ENCODE measurements at regions of chr2 and their contacts with region 1.

Region 1: GRCh38 chr2:168194784-168195522 is 52.4 kb downstream of the STK39 start:
- DNase-seq: no peak
- ATAC-seq: no peak
- H3K4me3 ChIP-seq: no peak overlapping the region
- H3K27ac ChIP-seq: no peak overlapping the region
- H3K4me1 ChIP-seq: peaks cover 96% of the 10 kb centered on the region
- H3K27me3 ChIP-seq: no peaks in the 10 kb centered on the region
- CTCF ChIP-seq: no peak
- EP300 ChIP-seq: no peak
- POLR2A ChIP-seq: no peak
- RAD21 ChIP-seq: no peak

Region 2: DNA sequence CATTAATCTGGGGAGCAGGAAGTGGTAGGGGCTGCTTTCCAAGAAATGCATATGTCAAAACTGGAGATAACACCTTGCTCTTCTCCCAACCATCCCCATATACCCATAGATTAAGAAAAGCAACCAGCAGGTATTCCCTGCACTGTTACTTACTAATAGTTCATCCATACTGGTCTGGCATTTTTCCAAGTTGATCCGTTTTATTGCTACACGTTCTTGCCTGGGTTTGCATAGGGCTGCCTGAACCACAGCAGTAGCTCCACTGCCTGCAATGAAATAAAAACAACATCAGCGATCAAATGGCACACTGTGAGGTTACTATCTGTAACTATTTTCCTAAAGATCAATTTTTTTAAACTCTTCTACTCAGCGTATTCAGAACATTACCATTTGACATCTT is 13.1 kb before region 1 on chr2:
- CTCF ChIA-PET with region 1: no interaction called
- POLR2A ChIA-PET with region 1: interaction called, 59 read pairs
- in situ Hi-C with region 1: no loop called
- intact Hi-C with region 1: loop called (anchors 1 kb)
- DNase-seq: no peak
- ATAC-seq: no peak
- H3K4me3 ChIP-seq: no peak overlapping the region
- H3K27ac ChIP-seq: peak overlapping the region; percentile 88
- H3K4me1 ChIP-seq: peaks cover 98% of the 10 kb centered on the region
- H3K27me3 ChIP-seq: no peaks in the 10 kb centered on the region
- CTCF ChIP-seq: no peak
- EP300 ChIP-seq: no peak
- POLR2A ChIP-seq: no peak
- RAD21 ChIP-seq: no peak

Region 3: DNA sequence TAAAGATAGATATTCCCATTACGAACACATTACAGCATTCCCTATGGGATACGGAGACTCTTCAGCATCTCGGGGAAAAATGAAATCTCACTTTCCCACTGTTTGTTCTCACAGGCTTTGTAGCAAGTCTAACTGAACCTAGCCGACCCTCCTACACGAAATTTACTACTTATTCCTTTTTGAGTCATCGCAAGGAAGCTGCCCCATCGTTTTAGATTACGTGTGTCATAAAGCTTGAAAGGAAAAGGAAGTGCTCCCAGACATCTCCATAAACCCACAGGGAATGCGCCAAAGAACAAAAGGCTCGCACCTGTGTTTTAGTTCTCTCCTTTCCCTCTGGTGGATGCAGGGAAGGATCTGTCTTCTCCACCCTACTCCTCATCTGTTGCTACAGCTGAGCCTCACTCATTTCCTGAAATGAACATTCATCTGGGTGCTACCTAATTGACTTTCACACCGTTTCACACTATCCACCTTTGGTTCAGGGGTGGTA is 128.6 kb after region 1 on chr2:
- CTCF ChIA-PET with region 1: no interaction called
- POLR2A ChIA-PET with region 1: no interaction called
- in situ Hi-C with region 1: no loop called
- intact Hi-C with region 1: no loop called
- DNase-seq: no peak
- ATAC-seq: no peak
- H3K4me3 ChIP-seq: no peak overlapping the region
- H3K27ac ChIP-seq: no peak overlapping the region
- H3K4me1 ChIP-seq: peaks cover 13% of the 10 kb centered on the region
- H3K27me3 ChIP-seq: 0 out of 5 replicates have a peak, but pooled peaks cover 2 to 7% of the 10 kb centered on the region in 2 experiments
- CTCF ChIP-seq: no peak
- EP300 ChIP-seq: no peak
- POLR2A ChIP-seq: no peak
- RAD21 ChIP-seq: no peak

Measured in HepG2 (cell line).